ENCODE measurements at regions of chr10 and their contacts with region 1.

Region 1: GRCh38 chr10:78588194-78588811 is 480.5 kb upstream of the ZMIZ1 start:
- DNase-seq: peak; percentile 86 to 94
- H3K4me3 ChIP-seq: no peak overlapping the region
- H3K4me3 Mint-ChIP-seq: peak overlapping the region; percentile 43
- H3K27ac Mint-ChIP-seq: peak overlapping the region; percentile 94
- H3K4me1 ChIP-seq: peaks cover 71% of the 10 kb centered on the region
- H3K4me1 Mint-ChIP-seq: peaks cover 53% of the 10 kb centered on the region
- H3K27me3 ChIP-seq: no peaks in the 10 kb centered on the region
- H3K27me3 Mint-ChIP-seq: no peaks in the 10 kb centered on the region
- CTCF ChIP-seq: no peak

Region 2: GRCh38 chr10:78263521-78263988 is 324.7 kb before region 1 on chr10:
- CTCF ChIA-PET with region 1: no interaction called
- POLR2A ChIA-PET with region 1: no interaction called
- intact Hi-C with region 1: loop called (anchors 2 kb)
- DNase-seq: no peak
- H3K4me3 ChIP-seq: no peak overlapping the region
- H3K4me3 Mint-ChIP-seq: no peak overlapping the region
- H3K27ac Mint-ChIP-seq: no peak overlapping the region
- H3K4me1 ChIP-seq: peaks cover 40% of the 10 kb centered on the region
- H3K4me1 Mint-ChIP-seq: peaks cover 45% of the 10 kb centered on the region
- H3K27me3 ChIP-seq: no peaks in the 10 kb centered on the region
- H3K27me3 Mint-ChIP-seq: no peaks in the 10 kb centered on the region
- CTCF ChIP-seq: no peak

Region 3: GRCh38 chr10:78424719-78425118 is 163.6 kb before region 1 on chr10:
- CTCF ChIA-PET with region 1: no interaction called
- POLR2A ChIA-PET with region 1: no interaction called
- intact Hi-C with region 1: loop called (anchors 2 kb)
- DNase-seq: peak in 1 of 2 experiments; percentile 53
- H3K4me3 ChIP-seq: no peak overlapping the region
- H3K4me3 Mint-ChIP-seq: no peak overlapping the region
- H3K27ac Mint-ChIP-seq: no peak overlapping the region
- H3K4me1 ChIP-seq: no peaks in the 10 kb centered on the region
- H3K4me1 Mint-ChIP-seq: no peaks in the 10 kb centered on the region
- H3K27me3 ChIP-seq: no peaks in the 10 kb centered on the region
- H3K27me3 Mint-ChIP-seq: no peaks in the 10 kb centered on the region
- CTCF ChIP-seq: peak; percentile 47 to 68

Region 4: GRCh38 chr10:78520737-78521430 is 67.4 kb before region 1 on chr10:
- CTCF ChIA-PET with region 1: no interaction called
- POLR2A ChIA-PET with region 1: no interaction called
- intact Hi-C with region 1: loop called (anchors 5 kb)
- DNase-seq: peak; percentile 68 to 71
- H3K4me3 ChIP-seq: no peak overlapping the region
- H3K4me3 Mint-ChIP-seq: no peak overlapping the region
- H3K27ac Mint-ChIP-seq: no peak overlapping the region
- H3K4me1 ChIP-seq: peaks cover 4% of the 10 kb centered on the region; the same call in 1 of the 2 replicates
- H3K4me1 Mint-ChIP-seq: peaks cover 15% of the 10 kb centered on the region
- H3K27me3 ChIP-seq: no peaks in the 10 kb centered on the region
- H3K27me3 Mint-ChIP-seq: no peaks in the 10 kb centered on the region
- CTCF ChIP-seq: peak; percentile 37 to 58

Region 5: DNA sequence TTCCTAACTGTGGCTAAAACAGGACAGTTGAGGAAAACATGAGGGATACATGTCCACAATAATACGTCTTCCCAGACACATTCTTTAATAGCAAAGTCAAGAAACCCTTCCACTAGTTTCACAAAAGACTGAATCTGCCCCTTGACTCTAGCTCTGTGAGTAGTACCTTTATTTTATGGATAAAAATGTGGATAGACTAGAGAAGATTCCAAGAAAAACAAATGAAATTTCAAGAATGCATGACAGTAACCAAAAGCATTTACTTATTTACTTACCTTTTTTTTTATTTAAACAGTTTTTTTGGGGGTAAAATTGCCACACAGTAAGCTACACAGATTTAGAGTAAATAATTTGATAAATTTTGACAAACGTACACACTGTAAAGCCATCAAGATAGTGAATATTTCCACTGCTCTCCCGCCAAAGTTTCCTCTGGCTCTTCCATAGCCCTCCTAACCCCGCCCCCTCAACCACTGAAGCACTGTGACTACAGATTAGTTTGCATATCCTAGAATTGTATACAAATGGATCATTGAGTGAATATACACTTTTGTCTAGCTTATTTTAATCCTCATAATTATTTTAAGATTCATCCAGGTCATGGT is 60.1 kb after region 1 on chr10:
- CTCF ChIA-PET with region 1: no interaction called
- POLR2A ChIA-PET with region 1: no interaction called
- intact Hi-C with region 1: loop called (anchors 1 kb)
- DNase-seq: peak in 1 of 2 experiments; percentile 29
- H3K4me3 ChIP-seq: no peak overlapping the region
- H3K4me3 Mint-ChIP-seq: no peak overlapping the region
- H3K27ac Mint-ChIP-seq: peak overlapping the region; percentile 37
- H3K4me1 ChIP-seq: peaks cover 16% of the 10 kb centered on the region
- H3K4me1 Mint-ChIP-seq: peaks cover 10% of the 10 kb centered on the region
- H3K27me3 ChIP-seq: no peaks in the 10 kb centered on the region
- H3K27me3 Mint-ChIP-seq: no peaks in the 10 kb centered on the region
- CTCF ChIP-seq: no peak

Region 6: DNA sequence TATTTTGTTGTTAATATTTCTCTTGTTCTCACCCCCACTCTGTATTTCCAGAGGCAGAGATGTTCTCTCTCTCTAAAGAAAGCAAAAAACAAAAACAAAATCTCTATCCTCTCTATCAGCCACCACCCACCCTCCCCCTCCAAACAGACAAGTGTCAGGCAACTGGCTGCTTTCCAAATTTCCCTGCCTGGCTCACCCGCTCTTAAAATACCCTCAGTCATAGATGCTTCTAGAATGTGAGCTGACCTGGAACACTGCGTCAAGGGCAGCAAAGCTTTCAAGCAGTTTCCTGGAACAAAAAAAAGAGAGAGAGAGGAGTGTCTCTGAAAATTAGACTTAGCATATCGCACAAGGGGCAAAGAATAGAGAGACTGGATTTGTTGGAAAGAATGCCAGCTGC is 139.4 kb after region 1 on chr10:
- CTCF ChIA-PET with region 1: no interaction called
- POLR2A ChIA-PET with region 1: no interaction called
- intact Hi-C with region 1: no loop called
- DNase-seq: no peak
- H3K4me3 ChIP-seq: no peak overlapping the region
- H3K4me3 Mint-ChIP-seq: no peak overlapping the region
- H3K27ac Mint-ChIP-seq: no peak overlapping the region
- H3K4me1 ChIP-seq: no peaks in the 10 kb centered on the region
- H3K4me1 Mint-ChIP-seq: no peaks in the 10 kb centered on the region
- H3K27me3 ChIP-seq: no peaks in the 10 kb centered on the region
- H3K27me3 Mint-ChIP-seq: peaks cover 4% of the 10 kb centered on the region
- CTCF ChIP-seq: no peak

Region 7: GRCh38 chr10:78744491-78745090 is 156.3 kb after region 1 on chr10:
- CTCF ChIA-PET with region 1: no interaction called
- POLR2A ChIA-PET with region 1: interaction called, 3 read pairs
- intact Hi-C with region 1: loop called (anchors 2 kb)
- DNase-seq: no peak
- H3K4me3 ChIP-seq: no peak overlapping the region
- H3K4me3 Mint-ChIP-seq: no peak overlapping the region
- H3K27ac Mint-ChIP-seq: peak overlapping the region; percentile 86
- H3K4me1 ChIP-seq: peaks cover 52% of the 10 kb centered on the region
- H3K4me1 Mint-ChIP-seq: peaks cover 51% of the 10 kb centered on the region
- H3K27me3 ChIP-seq: no peaks in the 10 kb centered on the region
- H3K27me3 Mint-ChIP-seq: no peaks in the 10 kb centered on the region
- CTCF ChIP-seq: peak in 1 of 2 experiments; percentile 2

Region 8: GRCh38 chr10:79195091-79195923 is 607.0 kb after region 1 on chr10:
- CTCF ChIA-PET with region 1: no interaction called
- POLR2A ChIA-PET with region 1: no interaction called
- intact Hi-C with region 1: loop called (anchors 5 kb)
- DNase-seq: peak; percentile 82 to 89
- H3K4me3 ChIP-seq: no peak overlapping the region
- H3K4me3 Mint-ChIP-seq: no peak overlapping the region
- H3K27ac Mint-ChIP-seq: peak overlapping the region; percentile 54
- H3K4me1 ChIP-seq: peaks cover 6% of the 10 kb centered on the region
- H3K4me1 Mint-ChIP-seq: peaks cover 6% of the 10 kb centered on the region
- H3K27me3 ChIP-seq: no peaks in the 10 kb centered on the region
- H3K27me3 Mint-ChIP-seq: no peaks in the 10 kb centered on the region
- CTCF ChIP-seq: peak; percentile 94 to 96

Measured in Caco-2 (cell line).